Mammary epithelial cell (primary cell): ENCODE measurements at regions of chr2 and their contacts with region 1.

Region 1: GRCh38 chr2:215920244-215921100 is 92.9 kb downstream of the MREG start:
- DNase-seq: peak; percentile 62
- H3K4me3 ChIP-seq: no peak overlapping the region
- H3K27ac ChIP-seq: no peak overlapping the region
- H3K4me1 ChIP-seq: peaks cover 22% of the 10 kb centered on the region
- H3K27me3 ChIP-seq: no peaks in the 10 kb centered on the region
- CTCF ChIP-seq: peak; percentile 83 to 93

Region 2: DNA sequence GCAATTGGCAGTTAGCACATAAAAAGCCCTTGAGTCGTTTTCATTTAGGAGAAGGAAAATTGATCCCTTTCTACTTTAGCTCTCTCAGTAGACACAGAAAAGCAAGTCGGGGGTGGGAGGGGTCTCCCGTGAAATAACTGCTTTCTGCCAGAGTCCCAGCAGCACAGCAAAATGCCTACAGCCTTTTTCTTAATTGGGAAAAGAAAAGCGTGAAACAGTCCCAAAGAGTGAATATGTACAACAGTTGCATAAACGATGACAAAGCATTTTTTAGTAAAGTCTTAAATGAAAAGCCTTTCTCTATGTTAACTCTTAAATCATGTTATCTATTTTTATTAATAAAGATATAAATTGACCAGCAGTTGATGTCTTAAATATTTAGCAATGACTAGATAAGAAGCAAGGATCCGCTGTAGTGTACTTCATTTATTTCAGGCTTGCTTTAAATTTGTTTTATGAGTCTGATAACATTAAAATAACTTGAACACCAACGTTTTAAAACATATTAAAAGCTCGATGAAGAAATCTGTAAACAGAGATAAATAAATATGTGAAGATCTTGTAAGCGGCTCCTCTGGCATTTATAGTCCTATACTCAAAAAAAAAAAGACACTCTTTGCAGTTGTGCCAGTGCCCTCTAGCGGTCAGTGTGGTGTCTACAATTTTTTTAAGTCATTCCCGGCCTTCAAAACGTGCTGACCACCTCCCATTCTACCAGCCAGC is 650.9 kb before region 1 on chr2:
- CTCF ChIA-PET with region 1: no interaction called
- dilution Hi-C with region 1: no loop called
- in situ Hi-C with region 1: no loop called
- intact Hi-C with region 1: loop called (anchors 10 kb)
- DNase-seq: peak; percentile 56
- H3K4me3 ChIP-seq: no peak overlapping the region
- H3K27ac ChIP-seq: no peak overlapping the region
- H3K4me1 ChIP-seq: peaks cover 3% of the 10 kb centered on the region
- H3K27me3 ChIP-seq: no peaks in the 10 kb centered on the region
- CTCF ChIP-seq: peak; percentile 68 to 73

Region 3: DNA sequence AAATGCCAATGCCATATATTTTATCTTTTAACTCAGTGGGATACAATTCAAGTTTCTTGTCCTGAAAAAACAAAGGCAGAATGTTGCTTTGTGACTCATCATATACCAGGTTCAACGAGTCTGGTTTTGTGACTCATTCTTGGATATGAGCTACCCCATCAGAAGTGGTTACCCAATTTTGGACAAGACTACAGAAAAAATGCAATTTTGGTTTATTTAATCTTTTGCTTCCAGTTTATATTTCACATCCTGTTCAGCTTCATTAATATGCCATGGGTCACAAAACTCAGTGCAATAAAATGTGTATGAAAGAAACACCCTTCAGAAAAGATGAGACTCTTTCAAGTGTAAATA is 509.6 kb before region 1 on chr2:
- CTCF ChIA-PET with region 1: no interaction called
- dilution Hi-C with region 1: no loop called
- in situ Hi-C with region 1: no loop called
- intact Hi-C with region 1: loop called (anchors 5 kb)
- DNase-seq: peak; percentile 86
- H3K4me3 ChIP-seq: no peak overlapping the region
- H3K27ac ChIP-seq: peak overlapping the region; percentile 43
- H3K4me1 ChIP-seq: peaks cover 31% of the 10 kb centered on the region
- H3K27me3 ChIP-seq: no peaks in the 10 kb centered on the region
- CTCF ChIP-seq: no peak

Region 4: GRCh38 chr2:215454519-215455246 is 465.8 kb before region 1 on chr2:
- CTCF ChIA-PET with region 1: interaction called, 8 read pairs
- dilution Hi-C with region 1: no loop called
- in situ Hi-C with region 1: loop called (anchors 10 kb)
- intact Hi-C with region 1: loop called (anchors 1 kb)
- DNase-seq: peak; percentile 43
- H3K4me3 ChIP-seq: no peak overlapping the region
- H3K27ac ChIP-seq: no peak overlapping the region
- H3K4me1 ChIP-seq: peaks cover 6% of the 10 kb centered on the region
- H3K27me3 ChIP-seq: no peaks in the 10 kb centered on the region
- CTCF ChIP-seq: peak; percentile 84 to 87

Region 5: DNA sequence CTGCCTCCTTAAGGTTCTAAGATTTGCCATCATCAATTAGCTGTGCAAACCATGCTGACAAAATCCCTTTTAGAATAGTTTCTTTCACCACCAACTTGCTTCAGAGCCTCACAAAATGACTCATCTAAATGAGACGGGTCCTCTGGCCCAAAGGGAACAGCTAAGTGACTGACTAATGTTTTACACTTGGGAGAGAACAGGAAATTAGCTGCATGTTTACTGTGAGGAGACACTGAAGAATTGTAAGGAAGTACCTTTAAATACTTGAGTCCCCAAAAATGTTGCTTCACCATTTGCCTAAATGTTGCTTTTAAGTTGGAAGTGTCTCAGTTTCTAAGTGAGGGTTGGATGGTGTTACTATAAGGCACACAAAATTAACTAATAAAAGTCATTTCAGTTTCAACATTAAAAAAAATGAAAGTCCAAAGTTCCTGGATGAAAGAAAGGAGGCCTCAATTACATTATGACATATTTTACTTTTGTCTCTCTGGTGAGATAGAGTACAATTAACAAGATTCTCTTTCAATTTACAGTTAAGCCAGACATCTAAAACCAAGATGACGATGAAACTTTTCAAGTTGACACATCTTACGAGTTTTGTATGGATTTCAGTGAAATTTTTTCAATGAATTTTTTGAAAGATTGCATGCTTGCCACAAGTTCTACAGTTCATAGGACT is 255.5 kb before region 1 on chr2:
- CTCF ChIA-PET with region 1: no interaction called
- dilution Hi-C with region 1: no loop called
- in situ Hi-C with region 1: no loop called
- intact Hi-C with region 1: loop called (anchors 5 kb)
- DNase-seq: peak; percentile 96
- H3K4me3 ChIP-seq: no peak overlapping the region
- H3K27ac ChIP-seq: peak overlapping the region; percentile 76
- H3K4me1 ChIP-seq: peaks cover 49% of the 10 kb centered on the region
- H3K27me3 ChIP-seq: no peaks in the 10 kb centered on the region
- CTCF ChIP-seq: no peak